Panc1 (cell line): ENCODE measurements at regions of chr1 and their contacts with region 1.

Region 1: GRCh38 chr1:196660852-196661251 is 9.0 kb downstream of the CFH start:
- DNase-seq: no peak
- ATAC-seq: peak; percentile 70; the same call in 1 of the 2 replicates
- H3K4me3 ChIP-seq: no peak overlapping the region
- H3K27ac ChIP-seq: no peak overlapping the region
- H3K4me1 ChIP-seq: no peaks in the 10 kb centered on the region
- H3K27me3 ChIP-seq: no peaks in the 10 kb centered on the region
- CTCF ChIP-seq: peak; percentile 50; the same call in 1 of the 2 replicates

Region 2: GRCh38 chr1:196148367-196148970 is 512.4 kb before region 1 on chr1:
- CTCF ChIA-PET with region 1: no interaction called
- POLR2A ChIA-PET with region 1: no interaction called
- in situ Hi-C with region 1: no loop called
- intact Hi-C with region 1: loop called (anchors 2 kb)
- DNase-seq: peak; percentile 25
- ATAC-seq: peak; percentile 68; the same call in 1 of the 2 replicates
- H3K4me3 ChIP-seq: no peak overlapping the region
- H3K27ac ChIP-seq: no peak overlapping the region
- H3K4me1 ChIP-seq: no peaks in the 10 kb centered on the region
- H3K27me3 ChIP-seq: no peaks in the 10 kb centered on the region
- CTCF ChIP-seq: peak; percentile 50; the same call in 1 of the 2 replicates

Region 3: DNA sequence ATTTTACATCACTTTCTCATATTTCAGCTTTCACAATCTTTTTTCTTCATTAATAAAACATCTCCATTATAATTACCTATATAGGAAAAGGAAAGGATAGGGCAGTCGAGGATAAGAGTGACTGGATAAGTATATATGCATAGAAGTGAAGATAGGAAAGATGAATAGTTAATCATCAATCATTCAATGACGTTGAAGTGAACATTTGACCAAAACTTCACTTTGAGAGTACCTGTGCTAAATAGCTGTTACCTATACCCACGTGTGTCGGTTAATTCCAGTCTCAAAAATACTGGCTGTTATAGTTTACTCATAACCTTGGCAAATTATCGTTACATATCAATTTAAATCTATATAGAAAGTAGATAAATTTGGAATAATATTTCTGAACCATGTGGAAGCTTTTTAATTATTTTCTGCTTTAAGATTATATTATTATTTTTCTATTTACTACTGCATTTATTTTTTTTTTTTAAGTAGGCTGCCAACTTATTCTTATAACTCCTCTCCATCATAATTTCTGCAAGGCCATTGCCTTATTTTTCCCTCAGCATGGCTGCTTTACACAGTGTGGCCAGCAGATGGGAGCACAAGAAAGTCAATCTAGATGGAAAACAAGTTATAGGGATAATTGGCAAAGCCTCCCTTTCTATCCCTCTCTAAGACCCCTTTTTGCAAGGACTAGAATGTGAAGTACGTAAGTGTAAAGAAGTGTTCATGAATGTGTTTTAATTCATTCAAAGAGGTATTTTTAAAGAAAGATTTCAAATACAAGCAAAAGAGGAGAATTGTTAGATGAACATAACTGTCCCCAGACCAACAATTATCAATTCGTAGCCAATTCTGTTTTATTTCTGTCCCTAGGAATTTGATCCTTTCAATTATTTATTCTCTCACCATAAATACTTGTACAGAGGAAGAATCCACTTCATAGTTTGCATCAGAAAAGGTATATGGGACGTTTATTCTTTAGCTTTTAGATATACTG is 343.0 kb before region 1 on chr1:
- CTCF ChIA-PET with region 1: no interaction called
- POLR2A ChIA-PET with region 1: no interaction called
- in situ Hi-C with region 1: no loop called
- intact Hi-C with region 1: loop called (anchors 1 kb)
- DNase-seq: peak; percentile 7
- ATAC-seq: no peak
- H3K4me3 ChIP-seq: no peak overlapping the region
- H3K27ac ChIP-seq: no peak overlapping the region
- H3K4me1 ChIP-seq: no peaks in the 10 kb centered on the region
- H3K27me3 ChIP-seq: no peaks in the 10 kb centered on the region
- CTCF ChIP-seq: peak; percentile 66; the same call in 1 of the 2 replicates

Region 4: DNA sequence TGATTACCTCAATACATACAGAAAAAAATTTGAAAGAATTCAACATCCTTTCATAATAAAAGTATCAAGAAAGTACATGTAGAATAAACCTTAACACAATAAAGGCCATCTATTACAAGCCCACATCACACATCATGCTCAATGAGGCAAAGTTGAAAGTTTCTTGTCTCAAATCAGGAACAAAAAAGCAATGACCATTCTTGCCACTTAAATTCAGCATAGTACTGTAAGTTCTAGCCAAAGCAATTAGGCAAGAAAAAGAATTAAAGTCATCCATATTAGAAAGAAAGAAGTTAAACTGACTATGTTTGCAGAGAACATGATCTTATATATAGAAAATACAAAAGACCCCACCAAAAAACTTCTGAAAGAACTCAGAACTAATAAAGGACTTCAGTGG is 97.1 kb before region 1 on chr1:
- CTCF ChIA-PET with region 1: interaction called, 10 read pairs
- POLR2A ChIA-PET with region 1: no interaction called
- in situ Hi-C with region 1: no loop called
- intact Hi-C with region 1: no loop called
- DNase-seq: no peak
- ATAC-seq: no peak
- H3K4me3 ChIP-seq: no peak overlapping the region
- H3K27ac ChIP-seq: no peak overlapping the region
- H3K4me1 ChIP-seq: no peaks in the 10 kb centered on the region
- H3K27me3 ChIP-seq: no peaks in the 10 kb centered on the region
- CTCF ChIP-seq: no peak